Common myeloid progenitor, CD34-positive (primary cell): ENCODE measurements at regions of chr9 and their contacts with region 1.

Region 1: GRCh38 chr9:124392871-124393460 is 22.3 kb downstream of the PSMB7 start:
- DNase-seq: no peak
- H3K4me3 ChIP-seq: no peak overlapping the region
- H3K27ac ChIP-seq: no peak overlapping the region
- H3K4me1 ChIP-seq: peaks cover 6 to 19% (median 10%) of the 10 kb centered on the region in 4 experiments
- H3K27me3 ChIP-seq: no peaks in the 10 kb centered on the region

Region 2: DNA sequence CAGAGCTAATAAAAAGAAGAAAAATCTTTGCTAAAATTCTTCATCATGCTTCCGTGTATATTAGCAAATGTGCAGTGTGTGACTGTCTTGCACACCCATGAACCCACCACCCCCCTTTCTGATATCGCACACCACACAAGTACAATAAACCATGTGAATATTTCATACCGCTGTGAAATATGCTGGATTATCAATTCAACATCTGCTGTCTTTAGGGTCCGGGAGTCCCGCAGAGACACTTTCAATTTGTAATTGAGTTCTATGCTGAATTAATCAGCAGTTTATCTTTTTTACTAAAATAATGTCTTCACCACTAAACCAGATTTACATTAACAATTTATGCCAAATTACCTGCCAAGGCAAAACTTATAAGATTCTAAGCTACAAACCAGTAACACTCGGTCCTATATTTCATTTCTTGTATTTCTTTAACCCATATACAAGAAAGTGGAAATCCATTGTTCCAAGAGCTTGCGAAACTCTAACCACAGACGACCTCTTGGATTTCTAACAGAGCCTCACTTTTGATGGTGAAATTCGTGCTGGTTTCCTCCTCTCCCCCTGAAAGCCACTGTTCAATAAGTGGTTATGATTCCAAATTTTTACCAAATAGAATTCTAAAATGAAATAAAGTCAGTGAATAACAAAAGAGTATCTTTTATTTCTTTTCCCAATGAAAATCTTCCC is 21.9 kb before region 1 on chr9:
- CTCF ChIA-PET with region 1: interaction called, 15 read pairs
- POLR2A ChIA-PET with region 1: interaction called, 3 read pairs
- DNase-seq: peak in 1 of 3 donors; percentile 8
- H3K4me3 ChIP-seq: no peak overlapping the region
- H3K27ac ChIP-seq: no peak overlapping the region
- H3K4me1 ChIP-seq: peaks cover 0 to 7% (median 0%) of the 10 kb centered on the region in 4 experiments
- H3K27me3 ChIP-seq: no peaks in the 10 kb centered on the region

Region 3: GRCh38 chr9:124381170-124381945 is 11.6 kb before region 1 on chr9:
- CTCF ChIA-PET with region 1: interaction called, 15 read pairs
- POLR2A ChIA-PET with region 1: no interaction called
- DNase-seq: peak in 2 of 3 donors; percentile 62 to 71
- H3K4me3 ChIP-seq: no peak overlapping the region
- H3K27ac ChIP-seq: peak overlapping the region in 1 of 2 experiments; percentile 54
- H3K4me1 ChIP-seq: peaks cover 0 to 11% (median 7%) of the 10 kb centered on the region in 4 experiments
- H3K27me3 ChIP-seq: no peaks in the 10 kb centered on the region

Region 4: DNA sequence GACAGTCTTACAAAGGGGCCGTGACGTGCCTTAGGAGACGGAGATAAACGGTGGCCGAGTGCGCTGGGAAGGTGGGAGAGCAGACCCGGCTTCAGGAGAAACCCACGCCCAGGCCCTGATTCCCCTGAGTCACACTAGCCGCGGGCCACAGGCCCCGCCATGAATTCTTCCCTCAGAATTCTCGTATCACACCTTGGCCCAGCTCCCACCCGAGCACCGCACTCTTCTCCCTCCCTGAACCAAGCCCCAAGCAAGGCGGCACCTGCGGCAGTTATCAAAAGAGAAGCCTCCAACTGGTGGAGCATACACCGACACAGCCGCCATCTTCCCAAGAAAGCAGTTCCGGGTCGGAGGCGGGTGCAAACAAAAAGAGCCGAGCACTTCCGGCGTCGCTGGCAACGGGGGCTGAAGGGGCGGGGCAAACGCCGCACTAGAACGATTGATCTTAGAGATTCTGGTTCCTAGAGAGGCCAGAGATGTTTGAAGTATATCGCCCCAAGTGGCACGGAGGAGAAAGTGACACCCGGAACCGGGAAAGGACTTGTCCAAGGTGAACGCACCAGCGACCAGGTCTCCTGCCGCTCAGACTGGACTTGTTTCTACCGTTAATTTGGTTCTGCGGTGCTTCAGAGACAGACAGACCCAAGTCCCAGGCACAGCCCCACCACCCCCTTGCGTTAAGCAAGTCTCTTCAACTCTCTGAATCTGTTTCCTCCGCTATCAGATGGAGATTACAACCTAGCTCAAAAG is 22.3 kb after region 1 on chr9 and contains the start of gene PSMB7:
- CTCF ChIA-PET with region 1: interaction called, 15 read pairs
- POLR2A ChIA-PET with region 1: no interaction called
- DNase-seq: peak; percentile 98 to 99 (median 98)
- H3K4me3 ChIP-seq: peak within 1 kb of the TSS; percentile 83 to 98 (median 96)
- H3K27ac ChIP-seq: peak within 1 kb of the TSS; percentile 65 to 90
- H3K4me1 ChIP-seq: peaks cover 6 to 13% (median 10%) of the 10 kb centered on the region in 4 experiments
- H3K27me3 ChIP-seq: no peaks in the 10 kb centered on the region